Left colon (tissue), 2 donors: ENCODE measurements at regions of chr15 and their contacts with region 1.

Region 1: GRCh38 chr15:75639709-75640482 is at the start of gene IMP3:
- DNase-seq: peak; percentile 94 to 96
- ATAC-seq: peak; percentile 88
- total RNA-seq, gene IMP3: 53.9 to 61.3 TPM

Region 2: DNA sequence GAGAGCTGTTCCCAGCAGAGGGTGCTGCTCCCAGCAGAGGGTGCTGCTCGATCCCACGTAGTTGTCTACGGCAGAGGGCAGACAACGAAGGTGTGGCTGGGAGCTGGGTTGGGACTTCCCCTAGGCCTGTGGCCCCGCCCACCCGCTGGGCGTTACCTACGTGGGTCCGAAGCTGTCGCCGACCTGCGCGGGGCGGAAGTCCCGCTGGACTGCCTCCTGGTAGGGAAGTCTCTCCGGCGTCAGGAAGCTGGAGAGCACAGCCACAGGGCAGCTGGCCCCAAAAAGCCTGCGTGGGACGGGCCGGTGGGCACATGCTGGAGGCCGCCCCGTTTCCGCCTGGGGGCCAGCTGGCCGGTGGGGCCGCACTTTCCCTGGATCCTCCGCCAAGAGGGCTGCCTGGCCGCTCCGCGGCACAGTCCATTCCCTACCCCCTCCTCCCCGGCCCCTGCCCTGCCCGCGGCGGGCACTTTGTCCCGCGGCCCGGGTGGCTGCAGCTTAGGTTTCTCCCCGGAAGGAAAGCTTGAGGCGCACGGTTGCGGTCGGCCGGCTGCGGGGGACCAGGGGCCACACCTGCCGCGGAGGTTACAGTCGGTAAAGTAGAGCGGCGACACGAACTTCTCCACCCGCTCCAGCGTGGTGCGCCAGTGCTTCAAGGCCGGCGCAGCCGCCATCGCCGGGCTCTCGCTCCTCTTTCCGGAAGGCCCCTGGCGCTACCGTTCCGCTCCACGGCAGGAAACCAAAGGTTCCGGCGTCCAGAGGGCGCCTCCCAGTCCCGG is 271.8 kb before region 1 on chr15 and contains the start of gene MAN2C1:
- intact Hi-C with region 1: loop called in 1 of 2 experiments (anchors 10 kb)
- DNase-seq: peak; percentile 98 to 99
- ATAC-seq: peak; percentile 91
- total RNA-seq, gene MAN2C1: 192 to 211 TPM

Region 3: DNA sequence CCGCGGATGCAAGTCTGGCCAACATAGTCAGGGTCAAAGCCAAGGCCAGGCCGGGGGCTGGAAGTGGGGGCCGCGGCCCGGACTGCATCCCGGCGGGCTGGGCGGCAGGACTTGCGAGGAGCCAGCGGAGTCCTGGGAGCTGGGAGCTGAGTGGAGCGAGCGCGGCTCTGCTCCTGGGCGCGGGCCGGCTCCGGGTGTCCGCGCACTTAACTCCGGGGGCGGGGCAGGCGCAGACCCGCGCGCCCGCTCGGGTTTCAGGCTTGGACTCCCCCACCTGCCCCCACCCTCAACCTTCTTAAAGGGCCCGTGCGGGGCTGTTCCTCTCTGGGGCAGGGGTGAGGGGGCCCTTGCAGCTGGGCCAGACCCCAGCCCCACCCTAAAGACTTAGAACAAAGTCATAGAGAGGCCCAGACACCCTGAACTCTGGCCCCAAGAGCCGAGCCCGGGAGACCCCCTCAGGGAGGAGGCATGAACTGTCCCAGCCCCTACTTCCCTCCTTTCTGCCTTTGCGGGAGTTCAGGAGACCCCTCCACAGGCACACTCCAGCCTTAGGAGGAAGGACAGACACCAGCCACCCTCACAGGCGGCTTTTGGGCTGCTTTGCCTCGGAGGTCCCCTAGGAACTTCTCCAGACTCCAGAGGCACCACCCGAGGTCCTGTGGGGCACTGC is 72.9 kb after region 1 on chr15 and contains the start of gene CSPG4:
- intact Hi-C with region 1: no loop called
- DNase-seq: peak; percentile 47 to 60
- ATAC-seq: peak; percentile 35
- total RNA-seq, gene CSPG4: 2.1 to 12.2 TPM

Region 4: DNA sequence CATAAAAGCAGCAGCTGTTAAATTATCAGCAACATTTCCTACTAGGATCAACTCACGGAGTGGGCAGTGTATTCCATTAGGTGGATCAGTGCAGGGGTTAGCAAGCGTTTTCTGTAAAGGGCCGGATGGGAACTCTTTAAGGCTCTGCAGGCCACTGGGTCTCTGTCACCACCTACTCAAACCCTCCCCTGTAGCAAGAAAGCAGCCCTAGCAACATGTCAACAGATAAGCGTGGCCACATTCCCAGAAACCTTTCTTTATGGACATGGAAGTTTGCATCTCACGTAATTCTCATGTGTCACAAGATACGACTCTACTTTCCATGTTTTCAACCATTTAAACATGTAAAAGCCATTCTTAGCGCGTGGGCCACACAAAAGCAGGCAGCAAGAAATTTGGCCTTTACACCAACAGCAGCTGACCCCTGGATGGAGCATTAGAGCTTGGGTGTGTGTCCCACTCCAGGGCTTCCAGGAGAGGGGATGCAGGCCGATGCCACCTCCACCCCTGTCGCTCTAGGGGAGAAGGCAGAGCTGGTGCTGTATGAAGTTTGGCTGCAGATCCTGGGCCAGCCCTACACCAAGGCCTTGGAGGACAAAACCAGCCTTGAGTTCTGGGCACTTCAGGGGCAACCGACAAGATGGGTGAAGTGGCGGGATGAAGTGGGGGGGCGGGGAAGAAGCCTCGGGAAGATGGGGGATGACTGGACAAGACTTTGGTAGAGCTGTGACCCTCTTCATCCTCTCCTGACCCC is 121.0 kb after region 1 on chr15:
- intact Hi-C with region 1: no loop called
- DNase-seq: no peak
- ATAC-seq: no peak